Activated naive CD4-positive, alpha-beta T cell treated with anti-CD3 and anti-CD28 coated beads for 36 hours (primary cell): ENCODE measurements at regions of chr1 and their contacts with region 1.

Region 1: GRCh38 chr1:93345633-93346420 is at the start of gene DR1:
- DNase-seq: peak; percentile 95
- H3K4me3 Mint-ChIP-seq: peak within 1 kb of the TSS; percentile 83
- H3K27ac Mint-ChIP-seq: peak within 1 kb of the TSS; percentile 96
- H3K4me1 Mint-ChIP-seq: peaks cover 25% of the 10 kb centered on the region
- H3K27me3 Mint-ChIP-seq: no peaks in the 10 kb centered on the region
- total RNA-seq, gene DR1: 76.3 to 80.3 TPM

Region 2: GRCh38 chr1:92960395-92961130 is 385.3 kb before region 1 on chr1:
- CTCF ChIA-PET with region 1: no interaction called
- intact Hi-C with region 1: loop called (anchors 1 kb)
- DNase-seq: peak; percentile 76
- H3K4me3 Mint-ChIP-seq: peak overlapping the region; percentile 89
- H3K27ac Mint-ChIP-seq: peak overlapping the region; percentile 94
- H3K4me1 Mint-ChIP-seq: peaks cover 41% of the 10 kb centered on the region
- H3K27me3 Mint-ChIP-seq: no peaks in the 10 kb centered on the region

Region 3: GRCh38 chr1:93179886-93180722 is 165.7 kb before region 1 on chr1 and contains the start of gene TMED5:
- CTCF ChIA-PET with region 1: no interaction called
- intact Hi-C with region 1: loop called (anchors 1 kb)
- DNase-seq: peak; percentile 98
- H3K4me3 Mint-ChIP-seq: peak within 1 kb of the TSS; percentile 88
- H3K27ac Mint-ChIP-seq: peak within 1 kb of the TSS; percentile 99
- H3K4me1 Mint-ChIP-seq: peaks cover 49% of the 10 kb centered on the region
- H3K27me3 Mint-ChIP-seq: no peaks in the 10 kb centered on the region
- total RNA-seq, gene TMED5: 27.8 to 28.2 TPM

Region 4: DNA sequence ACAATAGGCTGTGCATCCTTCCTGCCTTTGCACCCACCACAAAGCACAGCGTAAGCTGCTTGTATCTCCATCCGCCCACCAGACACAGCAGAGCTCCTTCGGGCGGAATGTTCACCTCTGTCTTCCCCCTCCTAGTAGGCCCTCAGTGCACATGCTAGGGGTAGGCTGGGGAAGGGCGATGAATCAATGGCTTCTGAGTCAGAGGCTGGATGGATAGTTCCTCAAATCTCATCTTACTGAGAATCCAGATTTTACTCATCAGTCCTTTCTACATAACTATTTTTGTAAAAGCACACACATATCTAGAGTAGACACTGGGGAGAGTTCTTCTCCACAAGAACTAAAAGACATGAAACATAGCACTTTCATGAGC is 262.0 kb after region 1 on chr1:
- CTCF ChIA-PET with region 1: no interaction called
- intact Hi-C with region 1: loop called (anchors 2 kb)
- DNase-seq: peak; percentile 78
- H3K4me3 Mint-ChIP-seq: no peak overlapping the region
- H3K27ac Mint-ChIP-seq: no peak overlapping the region
- H3K4me1 Mint-ChIP-seq: peaks cover 25% of the 10 kb centered on the region
- H3K27me3 Mint-ChIP-seq: peaks cover 21% of the 10 kb centered on the region

Region 5: GRCh38 chr1:93909146-93910050 is 563.6 kb after region 1 on chr1 and contains the start of gene GCLM:
- CTCF ChIA-PET with region 1: no interaction called
- intact Hi-C with region 1: loop called (anchors 2 kb)
- DNase-seq: peak; percentile 88
- H3K4me3 Mint-ChIP-seq: peak within 1 kb of the TSS; percentile 82
- H3K27ac Mint-ChIP-seq: peak within 1 kb of the TSS; percentile 87
- H3K4me1 Mint-ChIP-seq: peaks cover 27% of the 10 kb centered on the region
- H3K27me3 Mint-ChIP-seq: no peaks in the 10 kb centered on the region
- total RNA-seq, gene GCLM: 19.5 to 22.7 TPM